B cell (primary cell): ENCODE measurements at regions of chr17 and their contacts with region 1.

Region 1: DNA sequence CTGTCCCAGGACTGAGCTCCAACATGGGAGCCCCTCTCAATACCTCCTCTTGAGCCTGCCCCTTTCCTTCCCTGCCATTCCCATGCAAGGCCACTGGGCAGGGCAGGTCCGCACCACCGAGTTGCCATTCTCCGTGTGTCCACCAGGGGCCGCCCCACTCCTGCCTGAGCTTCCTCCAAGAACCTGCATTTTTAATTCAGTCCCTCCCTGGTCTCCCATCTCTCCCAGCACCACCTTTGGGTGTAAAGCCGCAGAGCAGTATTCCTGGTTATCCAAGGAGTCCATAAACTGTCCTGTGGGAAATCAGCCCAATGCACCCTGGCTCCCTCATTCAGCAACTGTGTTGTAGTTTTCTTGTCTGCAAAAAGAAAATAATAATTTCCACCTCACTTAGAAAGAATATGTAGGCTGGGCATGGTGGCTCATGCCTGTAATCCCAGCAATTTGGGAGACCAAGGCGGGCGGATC is 15.9 kb upstream of the ANKRD40CL start:
- DNase-seq: peak; percentile 81
- ATAC-seq: peak; percentile 98
- H3K4me3 ChIP-seq: no peak overlapping the region
- H3K4me3 Mint-ChIP-seq: no peak overlapping the region
- H3K27ac ChIP-seq: no peak overlapping the region
- H3K27ac Mint-ChIP-seq: no peak overlapping the region
- H3K4me1 ChIP-seq: peaks cover 0 to 5% of the 10 kb centered on the region in 2 donors
- H3K4me1 Mint-ChIP-seq: peaks cover 7% of the 10 kb centered on the region
- H3K27me3 ChIP-seq: peaks cover 0 to 3% (median 1%) of the 10 kb centered on the region in 4 experiments
- H3K27me3 Mint-ChIP-seq: peaks cover 16% of the 10 kb centered on the region
- CTCF ChIP-seq: peak; percentile 96

Region 2: DNA sequence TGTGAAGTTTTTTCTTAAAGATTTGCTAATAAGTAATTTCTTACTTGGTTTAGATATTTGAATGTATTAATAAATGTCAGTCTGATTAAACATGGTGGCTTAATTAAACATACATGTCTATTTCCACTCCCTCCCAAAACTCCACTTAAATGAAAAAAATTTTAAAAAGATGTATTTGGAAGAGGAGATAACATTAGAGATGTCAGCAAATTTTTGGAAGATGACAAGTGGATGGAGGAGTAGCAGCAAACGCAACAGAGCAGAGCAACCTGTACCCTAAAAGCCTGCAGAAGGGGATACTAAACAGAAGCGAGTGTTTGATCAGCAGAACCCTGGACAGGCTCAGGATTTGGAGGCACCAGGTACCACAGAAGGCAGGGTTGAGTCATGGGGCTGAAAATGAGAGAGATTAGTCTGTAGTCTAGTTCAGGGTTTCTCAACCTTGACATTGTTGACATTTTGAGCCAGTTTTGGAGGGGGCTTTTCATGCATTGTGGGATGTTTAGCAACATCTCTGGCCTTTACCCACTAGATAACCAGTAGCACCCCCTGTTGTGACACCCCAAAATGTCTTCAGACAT is 46.0 kb before region 1 on chr17:
- CTCF ChIA-PET with region 1: no interaction called
- POLR2A ChIA-PET with region 1: no interaction called
- intact Hi-C with region 1: no loop called
- DNase-seq: no peak
- ATAC-seq: no peak
- H3K4me3 ChIP-seq: no peak overlapping the region
- H3K4me3 Mint-ChIP-seq: no peak overlapping the region
- H3K27ac ChIP-seq: no peak overlapping the region
- H3K27ac Mint-ChIP-seq: no peak overlapping the region
- H3K4me1 ChIP-seq: no peaks in the 10 kb centered on the region
- H3K4me1 Mint-ChIP-seq: peaks cover 18% of the 10 kb centered on the region
- H3K27me3 ChIP-seq: no peaks in the 10 kb centered on the region
- H3K27me3 Mint-ChIP-seq: no peaks in the 10 kb centered on the region
- CTCF ChIP-seq: no peak

Region 3: DNA sequence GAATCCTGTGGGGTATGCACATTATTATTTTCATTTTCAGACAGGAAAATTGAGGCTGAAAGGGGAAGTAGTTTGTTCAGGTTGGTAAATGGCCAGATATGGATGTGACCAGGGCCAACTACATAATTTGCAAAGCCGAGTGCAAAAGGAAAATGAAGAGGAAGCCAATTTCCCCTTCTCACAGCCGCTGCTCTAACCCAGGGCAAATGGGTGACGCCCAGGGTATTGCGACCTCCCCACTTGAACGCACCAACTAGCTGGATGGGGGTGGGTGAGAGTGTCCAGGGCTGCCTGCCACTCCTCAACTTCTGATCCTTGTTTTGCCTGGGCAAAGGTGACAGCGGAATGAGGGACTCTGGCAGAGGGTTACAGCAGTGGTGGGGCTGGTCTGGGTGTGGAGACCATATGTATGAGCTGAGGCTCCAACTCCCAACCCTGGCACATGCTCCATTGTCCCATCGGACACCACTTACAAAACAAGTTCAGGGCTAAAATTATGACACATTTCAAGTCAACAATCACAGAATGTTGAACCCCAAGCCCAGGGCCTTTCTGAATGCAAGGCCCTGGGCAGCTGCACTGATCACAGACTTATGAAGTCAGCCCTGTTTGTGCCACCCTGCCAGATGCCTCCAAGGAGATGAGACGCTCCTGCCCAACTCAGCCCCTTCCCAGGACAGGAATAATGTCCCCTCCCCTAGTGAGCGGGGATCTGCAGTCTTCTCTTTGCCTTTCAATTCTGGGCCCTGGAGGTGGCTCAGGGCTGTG is 17.6 kb before region 1 on chr17:
- CTCF ChIA-PET with region 1: interaction called, 13 read pairs
- POLR2A ChIA-PET with region 1: no interaction called
- intact Hi-C with region 1: no loop called
- DNase-seq: peak; percentile 53
- ATAC-seq: peak; percentile 50
- H3K4me3 ChIP-seq: peak overlapping the region in 1 of 5 experiments; percentile 15
- H3K4me3 Mint-ChIP-seq: peak overlapping the region; percentile 59
- H3K27ac ChIP-seq: peak overlapping the region; percentile 15 to 35
- H3K27ac Mint-ChIP-seq: peak overlapping the region; percentile 70
- H3K4me1 ChIP-seq: peaks cover 32 to 36% of the 10 kb centered on the region in 2 donors
- H3K4me1 Mint-ChIP-seq: peaks cover 37% of the 10 kb centered on the region
- H3K27me3 ChIP-seq: no peaks in the 10 kb centered on the region
- H3K27me3 Mint-ChIP-seq: no peaks in the 10 kb centered on the region
- CTCF ChIP-seq: no peak

Region 4: DNA sequence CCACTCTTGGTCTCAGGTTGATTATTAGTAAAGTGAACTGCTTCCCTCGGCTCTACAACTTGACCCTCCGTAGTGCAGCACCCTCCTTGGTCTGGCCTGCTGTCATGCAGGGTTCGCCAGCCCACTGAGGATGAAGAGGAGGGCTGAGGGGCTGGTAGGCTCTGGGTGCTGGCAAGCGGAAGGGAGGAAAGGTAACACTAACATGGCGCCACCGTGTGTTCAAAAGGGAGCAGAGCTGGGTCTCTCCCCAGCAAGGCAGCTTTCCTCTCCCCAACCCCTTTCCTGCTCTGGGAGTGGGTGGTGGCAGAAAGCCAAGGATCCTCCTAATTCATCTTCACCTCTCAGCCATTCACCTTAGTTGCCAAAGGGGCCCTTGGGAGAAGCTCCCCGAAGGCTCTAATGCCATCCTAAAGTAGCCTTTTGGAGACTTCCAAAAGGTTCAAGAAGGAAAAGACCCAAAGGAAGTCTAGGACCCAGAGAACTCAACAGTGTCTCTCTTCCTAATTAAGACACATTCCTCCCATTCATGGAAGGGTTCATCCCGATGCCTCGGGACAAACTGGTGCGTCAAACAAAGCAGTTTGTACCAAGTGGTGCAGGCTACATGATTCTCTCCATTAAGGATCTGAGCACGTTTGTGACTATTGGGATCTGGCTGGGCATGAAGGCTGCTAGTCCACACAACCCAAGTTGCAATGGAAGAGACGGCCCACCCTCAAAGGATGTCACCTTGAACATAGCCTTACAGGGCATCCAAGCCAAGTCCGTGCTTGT is 173.7 kb after region 1 on chr17:
- CTCF ChIA-PET with region 1: interaction called, 6 read pairs
- POLR2A ChIA-PET with region 1: no interaction called
- intact Hi-C with region 1: loop called (anchors 1 kb)
- DNase-seq: peak; percentile 78
- ATAC-seq: peak; percentile 89
- H3K4me3 ChIP-seq: no peak overlapping the region
- H3K4me3 Mint-ChIP-seq: no peak overlapping the region
- H3K27ac ChIP-seq: no peak overlapping the region
- H3K27ac Mint-ChIP-seq: no peak overlapping the region
- H3K4me1 ChIP-seq: peaks cover 0 to 5% of the 10 kb centered on the region in 2 donors
- H3K4me1 Mint-ChIP-seq: peaks cover 2% of the 10 kb centered on the region
- H3K27me3 ChIP-seq: peaks cover 0 to 4% (median 0%) of the 10 kb centered on the region in 4 experiments
- H3K27me3 Mint-ChIP-seq: no peaks in the 10 kb centered on the region
- CTCF ChIP-seq: peak; percentile 79